ENCODE measurements at regions of chr19 and their contacts with region 1.

Region 1: GRCh38 chr19:41753936-41754529 is 1.3 kb upstream of the CEACAM6 start:
- DNase-seq: peak; percentile 79
- H3K4me3 ChIP-seq: no peak overlapping the region
- H3K27ac ChIP-seq: peak overlapping the region in 1 of 8 donors; percentile 28
- H3K4me1 ChIP-seq: peaks cover 0 to 49% (median 0%) of the 10 kb centered on the region in 6 donors
- H3K27me3 ChIP-seq: peaks cover 0 to 44% (median 0%) of the 10 kb centered on the region in 7 donors
- CTCF ChIP-seq: peak; percentile 31 to 83 (median 67)
- POLR2A ChIP-seq: no peak

Region 2: GRCh38 chr19:41785653-41786052 is 31.6 kb after region 1 on chr19:
- intact Hi-C with region 1: loop called (anchors 5 kb)
- DNase-seq: peak; percentile 84
- H3K4me3 ChIP-seq: peak overlapping the region in 1 of 8 donors; percentile 33
- H3K27ac ChIP-seq: peak overlapping the region in 5 of 8 donors; percentile 15 to 64 (median 51)
- H3K4me1 ChIP-seq: peaks cover 0 to 37% (median 25%) of the 10 kb centered on the region in 6 donors
- H3K27me3 ChIP-seq: peaks cover 0 to 64% (median 7%) of the 10 kb centered on the region in 7 donors
- CTCF ChIP-seq: peak; percentile 66 to 89 (median 77)
- POLR2A ChIP-seq: no peak

Region 3: DNA sequence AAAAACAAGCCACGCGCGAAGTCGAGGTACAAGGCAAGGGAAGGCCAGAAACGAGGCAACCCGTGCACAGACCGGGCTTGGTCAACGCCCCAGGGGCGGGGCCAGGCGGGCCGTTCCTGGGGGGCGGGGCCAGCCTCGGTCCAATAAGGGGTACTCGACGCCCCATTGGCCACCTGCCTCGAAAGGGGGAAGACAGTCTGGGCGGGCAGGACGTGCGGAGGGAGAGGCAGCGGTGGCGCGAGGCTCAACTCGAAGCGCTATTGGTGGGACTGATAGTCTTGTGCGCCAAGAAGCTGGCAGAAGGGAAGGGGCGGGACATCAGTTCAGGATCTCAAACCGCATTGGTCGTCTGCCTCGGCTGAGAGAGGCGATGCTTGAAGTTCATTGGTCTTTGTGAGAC is 90.6 kb after region 1 on chr19 and contains the start of gene LYPD4:
- intact Hi-C with region 1: no loop called
- DNase-seq: no peak
- H3K4me3 ChIP-seq: no peak within 1 kb of the TSS
- H3K27ac ChIP-seq: no peak within 1 kb of the TSS
- H3K4me1 ChIP-seq: no peaks in the 10 kb centered on the region
- H3K27me3 ChIP-seq: peaks cover 0 to 18% (median 0%) of the 10 kb centered on the region in 7 donors
- CTCF ChIP-seq: no peak
- POLR2A ChIP-seq: no peak
- total RNA-seq, gene LYPD4: not detected